ENCODE measurements at regions of chr11 and their contacts with region 1.

Region 1: DNA sequence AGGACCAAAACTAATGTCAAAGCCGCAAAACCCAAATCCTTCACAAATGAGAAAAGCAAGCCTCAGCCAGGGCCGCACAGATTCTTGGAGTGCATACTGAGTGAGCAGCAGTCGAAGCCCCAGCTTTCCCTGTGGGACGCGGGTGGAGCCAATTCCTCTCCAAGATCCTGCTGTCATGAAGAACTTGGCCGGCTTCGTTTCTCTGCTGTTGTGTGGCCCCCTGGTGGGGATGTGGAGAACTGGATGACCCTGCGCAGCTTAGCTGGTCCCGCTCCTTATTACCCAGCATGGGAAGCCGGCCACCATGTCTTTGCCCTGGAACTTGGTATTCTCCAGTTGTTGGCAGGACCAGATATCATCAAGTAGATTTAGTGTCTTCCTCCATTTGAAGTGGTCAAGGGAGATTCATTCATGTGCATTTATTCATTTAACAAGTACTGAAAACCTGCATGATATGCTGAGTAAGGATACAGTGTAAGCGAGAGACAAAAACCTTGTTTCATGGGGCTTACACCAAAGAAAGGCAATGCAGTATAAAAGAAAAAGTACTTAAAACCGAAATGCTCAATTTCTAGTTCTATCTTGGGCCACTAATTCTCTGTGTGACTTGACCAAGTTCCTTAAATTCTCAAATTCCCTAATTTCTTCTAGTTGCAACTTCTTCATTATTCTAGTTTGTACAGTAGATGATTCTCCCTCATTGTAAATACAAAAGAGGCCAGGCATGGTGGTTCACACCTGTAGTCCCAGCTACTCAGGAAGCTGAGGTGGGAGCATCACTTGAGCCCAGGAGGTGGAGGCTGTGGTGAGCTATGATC is 56.7 kb upstream of the CRTAM start:
- DNase-seq: peak; percentile 50
- H3K4me3 Mint-ChIP-seq: no peak overlapping the region
- H3K27ac Mint-ChIP-seq: no peak overlapping the region
- H3K4me1 Mint-ChIP-seq: peaks cover 12% of the 10 kb centered on the region
- H3K27me3 Mint-ChIP-seq: peaks cover 10% of the 10 kb centered on the region

Region 2: GRCh38 chr11:122628810-122629555 is 152.6 kb before region 1 on chr11:
- intact Hi-C with region 1: loop called (anchors 1 kb)
- DNase-seq: peak; percentile 34
- H3K4me3 Mint-ChIP-seq: no peak overlapping the region
- H3K27ac Mint-ChIP-seq: no peak overlapping the region
- H3K4me1 Mint-ChIP-seq: peaks cover 4% of the 10 kb centered on the region
- H3K27me3 Mint-ChIP-seq: peaks cover 5% of the 10 kb centered on the region

Region 3: GRCh38 chr11:122697636-122698167 is 83.9 kb before region 1 on chr11:
- intact Hi-C with region 1: loop called (anchors 1 kb)
- DNase-seq: peak; percentile 16
- H3K4me3 Mint-ChIP-seq: peak overlapping the region; percentile 70
- H3K27ac Mint-ChIP-seq: peak overlapping the region; percentile 78
- H3K4me1 Mint-ChIP-seq: peaks cover 45% of the 10 kb centered on the region
- H3K27me3 Mint-ChIP-seq: peaks cover 4% of the 10 kb centered on the region

Region 4: GRCh38 chr11:122743949-122744348 is 37.6 kb before region 1 on chr11:
- intact Hi-C with region 1: loop called (anchors 1 kb)
- DNase-seq: peak; percentile 75
- H3K4me3 Mint-ChIP-seq: no peak overlapping the region
- H3K27ac Mint-ChIP-seq: no peak overlapping the region
- H3K4me1 Mint-ChIP-seq: no peaks in the 10 kb centered on the region
- H3K27me3 Mint-ChIP-seq: peaks cover 18% of the 10 kb centered on the region

Region 5: DNA sequence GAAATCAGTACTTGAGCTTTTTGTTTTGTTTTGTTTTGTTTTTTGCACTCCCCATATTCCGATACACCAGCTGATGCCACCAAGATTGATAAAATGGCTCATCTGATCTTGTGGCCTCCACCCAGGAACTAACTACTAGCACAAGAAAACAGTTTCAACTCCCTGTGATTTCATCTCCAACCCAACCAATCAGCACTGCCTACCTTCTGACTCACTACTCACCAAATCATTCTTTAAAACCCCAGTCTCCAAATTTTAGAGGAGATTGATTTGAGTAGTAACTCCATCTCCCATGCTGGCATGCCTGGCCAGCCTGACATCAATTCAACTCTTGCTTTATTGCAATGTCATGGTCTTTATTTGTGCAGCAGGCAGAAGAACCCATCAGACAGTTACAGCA is 40.7 kb after region 1 on chr11:
- intact Hi-C with region 1: no loop called
- DNase-seq: no peak
- H3K4me3 Mint-ChIP-seq: no peak overlapping the region
- H3K27ac Mint-ChIP-seq: no peak overlapping the region
- H3K4me1 Mint-ChIP-seq: no peaks in the 10 kb centered on the region
- H3K27me3 Mint-ChIP-seq: peaks cover 14% of the 10 kb centered on the region

Region 6: DNA sequence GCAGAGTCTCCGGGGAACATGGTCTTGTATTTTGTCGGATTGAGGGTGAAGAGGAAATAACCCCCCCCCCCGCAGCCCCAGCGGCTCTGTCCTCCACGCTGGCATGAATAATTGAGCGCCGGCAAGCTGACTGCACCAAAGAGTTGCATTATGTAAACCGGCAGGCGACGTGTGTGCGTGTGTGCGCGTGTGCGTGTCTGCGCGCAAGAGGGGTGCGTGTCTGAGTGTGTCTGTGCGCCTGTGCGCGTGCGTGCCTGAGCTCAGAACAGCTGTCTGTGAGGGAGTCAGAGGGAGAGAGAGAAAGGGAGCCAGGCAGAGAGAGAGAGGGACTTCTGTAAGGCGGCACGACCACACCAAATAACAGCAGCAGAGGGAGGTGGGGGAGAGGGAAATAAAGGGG is 778.4 kb after region 1 on chr11:
- intact Hi-C with region 1: no loop called
- DNase-seq: peak; percentile 24
- H3K4me3 Mint-ChIP-seq: peak overlapping the region; percentile 65
- H3K27ac Mint-ChIP-seq: peak overlapping the region; percentile 57
- H3K4me1 Mint-ChIP-seq: peaks cover 28% of the 10 kb centered on the region
- H3K27me3 Mint-ChIP-seq: no peaks in the 10 kb centered on the region